ENCODE measurements at regions of chr12 and their contacts with region 1.

Region 1: GRCh38 chr12:68163560-68164081 is 4.1 kb upstream of the IFNG start:
- DNase-seq: peak; percentile 56
- H3K4me3 Mint-ChIP-seq: peak overlapping the region; percentile 20
- H3K27ac Mint-ChIP-seq: peak overlapping the region; percentile 57
- H3K4me1 Mint-ChIP-seq: peaks cover 41% of the 10 kb centered on the region
- H3K27me3 Mint-ChIP-seq: no peaks in the 10 kb centered on the region

Region 2: DNA sequence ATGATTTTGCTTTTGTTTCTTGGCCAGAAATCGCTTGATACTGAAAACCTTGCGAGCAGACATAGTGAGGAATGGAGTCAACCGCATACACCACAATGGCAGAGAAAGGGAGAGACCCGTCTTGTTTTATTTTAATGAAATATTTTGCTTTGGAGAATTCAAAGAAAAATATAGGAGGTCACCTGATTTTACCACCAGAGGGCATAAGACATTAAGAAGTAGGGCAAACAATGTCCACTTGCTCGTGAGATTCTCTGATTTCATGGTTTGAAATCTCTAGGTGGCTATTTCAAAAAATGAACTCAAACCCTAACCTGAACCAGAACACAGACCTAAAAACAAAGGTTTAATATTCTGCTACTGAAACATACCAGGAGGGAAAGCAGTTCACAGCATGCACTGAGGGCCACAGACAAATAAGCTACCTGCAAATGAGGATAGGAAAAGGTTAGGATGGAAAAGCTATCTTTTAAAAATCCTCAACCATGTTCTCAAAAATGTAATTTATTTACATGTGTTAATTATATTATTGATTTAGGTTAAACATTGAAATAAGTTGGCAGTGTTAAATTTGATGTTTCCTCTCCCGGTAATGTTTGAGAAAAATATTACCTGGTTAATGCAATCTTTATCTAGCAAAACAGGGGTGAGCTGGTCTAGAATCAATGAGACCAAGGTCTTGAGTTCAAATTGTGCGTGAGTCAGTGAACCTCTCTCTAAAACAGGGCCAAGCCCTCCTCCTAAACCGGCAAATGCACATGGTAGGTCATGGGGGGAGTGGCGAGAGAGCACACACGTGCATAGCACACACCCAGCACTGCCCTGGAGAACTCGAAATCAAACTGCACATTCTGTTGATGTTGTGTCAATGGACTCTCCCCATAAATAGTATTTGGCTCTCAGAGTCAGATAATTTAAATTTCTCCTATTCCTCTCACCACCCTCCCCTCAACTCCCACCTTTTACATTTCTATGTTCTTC is 161.8 kb before region 1 on chr12:
- CTCF ChIA-PET with region 1: interaction called, 34 read pairs
- POLR2A ChIA-PET with region 1: interaction called, 4 read pairs
- intact Hi-C with region 1: loop called (anchors 1 kb)
- DNase-seq: no peak
- H3K4me3 Mint-ChIP-seq: no peak overlapping the region
- H3K27ac Mint-ChIP-seq: peak overlapping the region; percentile 15
- H3K4me1 Mint-ChIP-seq: peaks cover 15% of the 10 kb centered on the region
- H3K27me3 Mint-ChIP-seq: no peaks in the 10 kb centered on the region

Region 3: GRCh38 chr12:68180792-68181744 is 17.4 kb after region 1 on chr12:
- CTCF ChIA-PET with region 1: interaction called, 25 read pairs
- POLR2A ChIA-PET with region 1: interaction called, 5 read pairs
- intact Hi-C with region 1: loop called (anchors 2 kb)
- DNase-seq: peak; percentile 63
- H3K4me3 Mint-ChIP-seq: no peak overlapping the region
- H3K27ac Mint-ChIP-seq: peak overlapping the region; percentile 78
- H3K4me1 Mint-ChIP-seq: peaks cover 54% of the 10 kb centered on the region
- H3K27me3 Mint-ChIP-seq: no peaks in the 10 kb centered on the region